Testis (tissue), 5 donors: ENCODE measurements at regions of chr15 and their contacts with region 1.

Region 1: DNA sequence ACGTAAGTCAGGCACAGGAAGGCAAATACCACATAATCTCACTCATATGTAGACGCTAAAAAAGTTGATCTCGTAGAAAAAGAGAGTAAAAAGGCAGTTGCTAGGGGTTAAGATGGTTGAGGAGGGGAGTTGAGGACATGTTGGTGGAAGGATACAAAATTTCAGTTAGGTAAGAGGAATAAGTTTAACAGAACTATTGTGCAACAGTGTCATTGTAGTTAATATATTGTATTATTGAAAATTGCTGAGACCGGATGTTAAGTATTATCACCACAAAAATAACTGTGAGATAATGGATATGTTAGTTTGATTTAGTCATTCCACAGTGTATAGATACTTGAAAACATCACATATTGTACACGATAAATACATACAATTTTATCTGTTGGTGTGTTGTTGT is 139.1 kb downstream of the ADAMTSL3 start:
- DNase-seq: no peak
- H3K4me3 ChIP-seq: no peak overlapping the region
- H3K27ac ChIP-seq: no peak overlapping the region
- H3K4me1 ChIP-seq: no peaks in the 10 kb centered on the region
- H3K27me3 ChIP-seq: no peaks in the 10 kb centered on the region
- CTCF ChIP-seq: no peak
- POLR2A ChIP-seq: no peak

Region 2: DNA sequence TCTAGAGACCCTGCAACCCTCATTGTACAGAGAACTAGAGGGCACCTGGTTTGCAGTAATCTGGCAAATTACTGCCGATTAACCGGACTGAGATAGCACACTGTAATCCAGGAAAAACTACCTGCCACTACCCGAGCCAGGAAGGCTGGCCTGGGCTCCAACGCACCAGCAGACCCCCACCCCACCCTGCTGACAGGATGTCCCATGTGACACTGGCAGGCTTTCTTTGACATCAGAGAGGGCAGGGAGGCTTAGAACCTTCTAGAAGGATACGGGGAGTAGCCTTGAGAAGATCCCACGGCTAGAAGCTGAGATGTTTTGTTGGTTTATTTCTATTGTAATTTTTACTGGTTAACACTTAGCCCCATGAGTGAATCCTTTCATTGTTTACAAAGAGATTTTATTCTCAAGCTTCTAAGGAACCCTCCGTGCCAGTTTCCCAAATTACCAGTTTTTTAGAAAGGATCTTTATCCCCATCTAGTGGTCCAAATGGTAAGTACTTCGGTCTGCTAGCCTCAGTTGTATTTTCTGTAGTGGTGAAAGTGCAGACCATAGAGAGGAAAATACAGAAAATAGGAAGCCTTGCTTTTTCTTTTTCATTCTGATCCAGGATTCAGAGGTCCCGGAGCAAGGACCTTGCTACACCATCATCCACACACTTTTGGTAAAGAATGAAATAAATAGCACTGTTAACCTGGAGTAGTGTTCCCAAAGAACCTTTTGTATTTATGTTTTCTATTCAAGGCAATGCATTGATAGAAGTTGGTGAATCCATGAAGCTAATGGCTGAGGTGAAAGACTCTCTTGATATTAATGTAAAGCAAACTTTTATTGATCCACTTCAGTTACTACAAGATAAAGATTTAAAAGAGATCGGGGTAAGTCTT is 221.0 kb before region 1 on chr15:
- intact Hi-C with region 1: no loop called
- DNase-seq: no peak
- H3K4me3 ChIP-seq: no peak overlapping the region
- H3K27ac ChIP-seq: no peak overlapping the region
- H3K4me1 ChIP-seq: no peaks in the 10 kb centered on the region
- H3K27me3 ChIP-seq: no peaks in the 10 kb centered on the region
- CTCF ChIP-seq: peak in 2 of 3 experiments; percentile 38 to 64
- POLR2A ChIP-seq: no peak

Region 3: GRCh38 chr15:83775730-83776129 is 17.3 kb before region 1 on chr15:
- intact Hi-C with region 1: loop called (anchors 2 kb)
- DNase-seq: no peak
- H3K4me3 ChIP-seq: no peak overlapping the region
- H3K27ac ChIP-seq: no peak overlapping the region
- H3K4me1 ChIP-seq: no peaks in the 10 kb centered on the region
- H3K27me3 ChIP-seq: no peaks in the 10 kb centered on the region
- CTCF ChIP-seq: no peak
- POLR2A ChIP-seq: no peak